HepG2 (cell line): ENCODE measurements at regions of chr20 and their contacts with region 1.

Region 1: DNA sequence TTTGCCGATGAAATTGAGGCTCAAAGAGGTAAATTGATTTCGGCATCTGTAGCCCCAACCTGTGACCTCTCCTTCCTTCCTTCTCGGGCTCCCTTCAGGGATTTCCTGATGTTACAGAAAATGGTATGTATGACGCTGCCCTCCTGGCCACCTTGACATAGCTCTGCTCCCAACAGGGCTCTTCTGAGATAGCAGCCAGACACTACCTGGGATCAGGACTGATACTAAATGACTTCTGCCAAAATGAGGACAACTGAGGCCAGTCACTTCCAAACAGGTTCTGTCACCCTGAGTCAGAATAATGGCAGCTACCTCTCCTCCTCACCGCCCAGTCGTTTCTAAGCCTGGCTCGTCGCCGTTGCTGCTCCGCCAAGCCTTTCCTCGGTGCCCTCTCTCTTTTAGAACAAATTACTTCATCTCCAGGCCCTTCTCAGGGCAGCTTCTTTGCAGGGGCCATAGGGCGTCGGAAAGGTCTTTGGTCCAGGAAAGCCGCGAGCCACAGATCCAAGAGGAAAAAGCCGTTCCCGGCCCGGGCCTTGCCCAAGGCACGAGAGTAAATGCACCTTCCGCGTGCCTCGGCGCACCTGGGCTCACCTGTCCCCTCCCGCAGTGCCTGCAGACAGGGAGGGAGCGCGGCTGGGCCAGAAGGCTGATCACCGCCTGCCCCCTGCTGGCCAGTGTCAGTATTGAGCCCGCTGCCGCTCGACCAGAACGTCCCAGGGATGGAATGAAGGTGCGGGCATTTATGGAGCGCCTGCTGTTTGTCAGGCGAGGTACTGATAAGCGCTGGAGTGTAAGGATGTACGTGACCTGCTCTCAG is 904 bp upstream of the LPIN3 start:
- DNase-seq: peak; percentile 81
- ATAC-seq: peak; percentile 85
- H3K4me3 ChIP-seq: peak overlapping the region; percentile 68 to 91 (median 76)
- H3K27ac ChIP-seq: no peak overlapping the region
- H3K4me1 ChIP-seq: peaks cover 40% of the 10 kb centered on the region
- H3K27me3 ChIP-seq: peaks cover 5 to 20% of the 10 kb centered on the region in 2 experiments
- CTCF ChIP-seq: peak; percentile 100
- EP300 ChIP-seq: no peak
- POLR2A ChIP-seq: no peak
- RAD21 ChIP-seq: peak; percentile 100

Region 2: GRCh38 chr20:40962730-40963504 is 376.8 kb before region 1 on chr20:
- CTCF ChIA-PET with region 1: no interaction called
- POLR2A ChIA-PET with region 1: no interaction called
- in situ Hi-C with region 1: loop called (anchors 5 kb)
- intact Hi-C with region 1: loop called (anchors 1 kb)
- DNase-seq: peak; percentile 72
- ATAC-seq: peak; percentile 90
- H3K4me3 ChIP-seq: peak overlapping the region in 2 of 3 experiments; percentile 17 to 62; a peak in 2 of 6 replicates
- H3K27ac ChIP-seq: no peak overlapping the region
- H3K4me1 ChIP-seq: peaks cover 22% of the 10 kb centered on the region
- H3K27me3 ChIP-seq: peaks cover 2 to 5% of the 10 kb centered on the region in 2 experiments; a peak in 1 of 5 replicates
- CTCF ChIP-seq: peak; percentile 93
- EP300 ChIP-seq: no peak
- POLR2A ChIP-seq: no peak
- RAD21 ChIP-seq: peak; percentile 94

Region 3: DNA sequence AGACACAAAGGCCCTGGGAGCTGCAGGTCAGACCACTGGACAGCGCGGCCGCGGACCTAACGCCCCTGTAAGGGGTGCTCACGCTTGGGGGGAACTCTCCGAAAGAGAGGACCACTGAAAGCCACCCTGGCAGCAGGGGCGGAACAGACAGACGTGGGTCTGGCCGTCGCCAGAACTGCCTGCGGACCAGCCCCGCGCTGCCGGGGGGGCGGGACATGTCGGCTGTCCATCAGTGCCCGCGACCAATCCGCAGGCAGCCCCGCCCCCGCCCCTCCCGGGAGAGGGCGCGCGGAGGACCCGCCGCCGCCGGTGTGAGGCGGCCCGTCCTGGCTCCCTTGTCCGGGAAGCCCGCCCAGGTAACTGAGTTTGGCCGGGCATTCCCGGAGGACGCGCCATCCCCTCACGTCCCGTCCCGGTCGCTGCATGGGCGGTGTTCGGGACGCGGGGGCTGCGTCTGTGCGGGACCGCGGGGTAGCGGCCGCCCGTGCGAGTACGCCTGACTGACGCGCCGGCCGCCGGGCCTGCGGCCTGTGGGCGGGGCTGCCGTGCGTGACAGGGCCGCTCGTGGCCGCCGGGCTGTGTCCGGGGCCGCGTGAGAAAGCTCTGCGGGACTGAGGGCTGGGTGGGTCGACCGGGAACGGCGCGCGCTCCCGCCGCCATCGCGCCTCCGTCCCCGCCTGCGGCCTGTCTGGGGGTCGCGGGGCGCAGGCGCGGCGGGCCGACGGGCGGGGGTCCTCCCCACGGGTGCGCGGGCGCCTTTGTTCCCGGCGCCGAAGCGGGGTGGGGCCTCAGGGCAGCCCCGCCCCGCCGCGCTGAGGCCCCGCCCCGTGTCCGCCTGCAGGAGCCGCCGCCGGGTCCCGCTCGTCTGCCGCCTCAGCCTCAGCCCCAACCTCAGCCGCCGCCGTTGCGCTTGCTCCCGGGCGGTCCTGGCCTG is 202.8 kb before region 1 on chr20 and contains the start of gene PLCG1:
- CTCF ChIA-PET with region 1: interaction called, 28 read pairs
- POLR2A ChIA-PET with region 1: interaction called, 18 read pairs
- in situ Hi-C with region 1: loop called (anchors 10 kb)
- intact Hi-C with region 1: loop called (anchors 1 kb)
- DNase-seq: peak; percentile 84
- ATAC-seq: peak; percentile 73
- H3K4me3 ChIP-seq: peak within 1 kb of the TSS; percentile 81 to 91 (median 85)
- H3K27ac ChIP-seq: peak within 1 kb of the TSS; percentile 88
- H3K4me1 ChIP-seq: peaks cover 80% of the 10 kb centered on the region
- H3K27me3 ChIP-seq: no peaks in the 10 kb centered on the region
- CTCF ChIP-seq: no peak; the same call in 1 of the 2 replicates
- EP300 ChIP-seq: peak in 1 of 2 experiments; percentile 8; a peak in 1 of 4 replicates
- POLR2A ChIP-seq: peak; percentile 80 to 91
- RAD21 ChIP-seq: peak; percentile 64; the same call in 1 of the 2 replicates
- total RNA-seq, gene PLCG1: 53.1 and 85.3 TPM in 2 replicates

Region 4: GRCh38 chr20:41200446-41201202 is 139.1 kb before region 1 on chr20:
- CTCF ChIA-PET with region 1: no interaction called
- POLR2A ChIA-PET with region 1: no interaction called
- in situ Hi-C with region 1: no loop called
- intact Hi-C with region 1: no loop called
- DNase-seq: no peak
- ATAC-seq: no peak
- H3K4me3 ChIP-seq: no peak overlapping the region
- H3K27ac ChIP-seq: no peak overlapping the region
- H3K4me1 ChIP-seq: no peaks in the 10 kb centered on the region
- H3K27me3 ChIP-seq: no peaks in the 10 kb centered on the region
- CTCF ChIP-seq: no peak
- EP300 ChIP-seq: no peak
- POLR2A ChIP-seq: no peak
- RAD21 ChIP-seq: no peak

Region 5: GRCh38 chr20:41232973-41233926 is 106.5 kb before region 1 on chr20:
- CTCF ChIA-PET with region 1: interaction called, 8 read pairs
- POLR2A ChIA-PET with region 1: no interaction called
- in situ Hi-C with region 1: no loop called
- intact Hi-C with region 1: loop called (anchors 1 kb)
- DNase-seq: no peak
- ATAC-seq: peak; percentile 32
- H3K4me3 ChIP-seq: no peak overlapping the region
- H3K27ac ChIP-seq: no peak overlapping the region
- H3K4me1 ChIP-seq: peaks cover 30% of the 10 kb centered on the region
- H3K27me3 ChIP-seq: no peaks in the 10 kb centered on the region; a peak in 1 of 5 replicates
- CTCF ChIP-seq: no peak
- EP300 ChIP-seq: no peak
- POLR2A ChIP-seq: no peak
- RAD21 ChIP-seq: no peak

Region 6: GRCh38 chr20:41317536-41318270 is 22.0 kb before region 1 on chr20 and contains the start of gene ZHX3:
- CTCF ChIA-PET with region 1: no interaction called
- POLR2A ChIA-PET with region 1: interaction called, 16 read pairs
- in situ Hi-C with region 1: no loop called
- intact Hi-C with region 1: no loop called
- DNase-seq: peak; percentile 96
- ATAC-seq: peak; percentile 96
- H3K4me3 ChIP-seq: peak within 1 kb of the TSS; percentile 75 to 95 (median 91)
- H3K27ac ChIP-seq: peak within 1 kb of the TSS; percentile 68
- H3K4me1 ChIP-seq: peaks cover 47% of the 10 kb centered on the region
- H3K27me3 ChIP-seq: peaks cover 0 to 3% of the 10 kb centered on the region in 2 experiments; a peak in 1 of 5 replicates
- CTCF ChIP-seq: 0 out of 2 replicates have a peak, but pooled peaks have one; percentile 14
- EP300 ChIP-seq: 0 out of 4 replicates have a peak, but pooled peaks of 1 of the 2 experiments have one; percentile 3
- POLR2A ChIP-seq: peak in 1 of 2 experiments; percentile 89; a peak in 3 of 4 replicates
- RAD21 ChIP-seq: no peak; the same call in 1 of the 2 replicates
- total RNA-seq, gene ZHX3: 11.7 and 13.0 TPM in 2 replicates

Region 7: GRCh38 chr20:41357424-41358163 is 17.9 kb after region 1 on chr20:
- CTCF ChIA-PET with region 1: no interaction called
- POLR2A ChIA-PET with region 1: interaction called, 6 read pairs
- in situ Hi-C with region 1: no loop called
- intact Hi-C with region 1: loop called (anchors 2 kb)
- DNase-seq: no peak
- ATAC-seq: peak; percentile 46
- H3K4me3 ChIP-seq: no peak overlapping the region
- H3K27ac ChIP-seq: no peak overlapping the region
- H3K4me1 ChIP-seq: peaks cover 13% of the 10 kb centered on the region
- H3K27me3 ChIP-seq: no peaks in the 10 kb centered on the region
- CTCF ChIP-seq: peak; percentile 44
- EP300 ChIP-seq: no peak
- POLR2A ChIP-seq: no peak
- RAD21 ChIP-seq: no peak

Region 8: GRCh38 chr20:41534842-41535241 is 195.1 kb after region 1 on chr20:
- CTCF ChIA-PET with region 1: no interaction called
- POLR2A ChIA-PET with region 1: no interaction called
- in situ Hi-C with region 1: no loop called
- intact Hi-C with region 1: loop called (anchors 1 kb)
- DNase-seq: no peak
- ATAC-seq: no peak
- H3K4me3 ChIP-seq: no peak overlapping the region
- H3K27ac ChIP-seq: no peak overlapping the region
- H3K4me1 ChIP-seq: peaks cover 72% of the 10 kb centered on the region
- H3K27me3 ChIP-seq: no peaks in the 10 kb centered on the region
- CTCF ChIP-seq: no peak
- EP300 ChIP-seq: no peak
- POLR2A ChIP-seq: no peak
- RAD21 ChIP-seq: no peak